ENCODE measurements at regions of chr7 and their contacts with region 1.

Region 1: DNA sequence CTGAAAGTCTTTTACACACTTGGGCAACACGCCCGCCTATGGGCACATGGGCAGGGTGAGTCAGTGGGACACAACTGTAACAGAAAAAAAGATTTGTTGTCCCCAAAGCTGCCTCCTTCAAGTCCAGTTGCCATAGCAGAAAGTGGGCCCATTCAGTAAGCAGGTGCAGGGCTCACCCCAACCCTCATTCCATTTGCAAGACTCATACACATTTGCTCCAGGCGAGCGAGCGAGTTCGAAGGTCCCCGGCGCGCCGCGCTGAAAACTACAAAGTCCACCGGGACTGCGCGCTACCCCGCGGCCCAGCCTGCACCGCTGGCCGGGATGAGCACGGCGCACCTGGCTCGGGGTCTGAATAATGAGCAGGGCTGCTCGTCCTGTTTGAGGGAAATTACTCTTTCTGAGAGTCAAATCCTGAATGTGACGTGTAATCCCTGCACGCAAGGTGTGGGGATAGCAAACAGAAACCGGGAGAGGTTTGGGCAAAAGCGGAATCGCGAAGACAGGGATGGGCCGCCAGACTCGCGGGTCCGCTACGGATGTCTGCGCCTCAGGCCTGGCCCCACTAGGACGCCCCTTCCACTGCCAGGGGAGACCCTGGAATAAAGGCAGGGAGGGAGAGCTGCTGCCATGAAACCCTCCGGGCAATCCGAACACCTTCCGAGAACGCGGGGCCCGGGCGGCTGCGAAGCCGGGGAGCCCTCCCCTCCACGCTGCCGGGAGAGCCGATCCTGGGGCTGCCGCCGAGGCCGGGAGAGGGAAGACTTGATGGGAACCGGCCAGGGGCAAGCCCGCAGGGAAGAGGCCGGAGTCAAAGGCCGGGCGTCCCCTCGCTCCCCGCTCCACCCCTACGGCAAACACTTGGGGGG is 982 bp downstream of the COBL start:
- DNase-seq: no peak
- ATAC-seq: peak; percentile 61

Region 2: DNA sequence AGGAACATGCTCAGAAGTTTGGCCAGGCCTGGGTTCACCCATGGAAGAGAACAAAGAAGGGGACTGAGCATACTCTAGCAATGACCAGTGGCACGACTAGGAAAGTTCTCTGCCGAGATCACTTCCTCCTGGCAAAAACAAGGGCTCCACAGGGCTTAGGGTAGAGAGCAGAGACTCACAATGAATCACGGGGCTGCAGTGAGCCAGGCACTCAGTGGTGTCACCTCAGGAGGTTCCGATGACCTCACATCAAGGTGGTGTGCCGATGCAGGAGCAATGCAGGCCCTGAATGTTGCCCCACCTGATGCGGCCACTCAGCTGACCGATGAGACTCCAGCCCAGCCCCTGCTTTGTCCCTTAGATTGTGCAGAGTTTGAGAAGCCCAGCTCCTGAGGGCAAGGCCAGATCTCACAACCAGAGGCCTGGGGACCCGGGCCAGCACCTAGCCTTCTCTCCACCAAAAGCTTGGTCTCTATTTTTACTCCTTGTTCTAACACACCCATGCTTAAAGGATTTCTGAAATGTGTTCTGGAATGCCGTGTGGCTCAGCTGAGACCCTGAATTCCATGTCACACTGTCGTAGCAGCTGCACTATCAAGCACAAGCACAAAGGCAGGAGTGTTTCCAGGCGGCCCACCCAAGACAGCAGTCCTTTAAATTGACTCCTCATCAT is 60.0 kb before region 1 on chr7:
- intact Hi-C with region 1: loop called (anchors 5 kb)
- DNase-seq: no peak
- ATAC-seq: peak; percentile 69

Region 3: DNA sequence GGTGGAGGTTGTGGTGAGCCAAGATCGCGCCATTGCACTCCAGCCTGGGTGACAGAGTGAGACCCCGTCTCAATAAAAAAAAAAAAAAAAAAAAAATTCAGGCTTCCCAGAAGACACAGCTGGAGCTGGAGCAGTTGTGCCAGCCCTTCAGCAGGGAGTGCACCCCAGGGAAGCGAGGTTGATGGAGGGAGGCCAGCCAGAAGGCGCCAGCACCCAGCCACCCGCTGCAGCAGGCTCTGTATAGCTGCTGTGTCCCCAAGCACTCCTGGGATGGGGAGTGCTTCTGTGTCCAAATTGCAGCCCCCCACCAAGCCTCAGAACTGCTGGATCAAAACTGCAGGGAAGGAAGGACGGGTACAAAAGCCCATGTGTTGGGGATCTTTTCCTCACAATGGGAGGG is 46.8 kb before region 1 on chr7:
- intact Hi-C with region 1: no loop called
- DNase-seq: no peak
- ATAC-seq: no peak

Region 4: DNA sequence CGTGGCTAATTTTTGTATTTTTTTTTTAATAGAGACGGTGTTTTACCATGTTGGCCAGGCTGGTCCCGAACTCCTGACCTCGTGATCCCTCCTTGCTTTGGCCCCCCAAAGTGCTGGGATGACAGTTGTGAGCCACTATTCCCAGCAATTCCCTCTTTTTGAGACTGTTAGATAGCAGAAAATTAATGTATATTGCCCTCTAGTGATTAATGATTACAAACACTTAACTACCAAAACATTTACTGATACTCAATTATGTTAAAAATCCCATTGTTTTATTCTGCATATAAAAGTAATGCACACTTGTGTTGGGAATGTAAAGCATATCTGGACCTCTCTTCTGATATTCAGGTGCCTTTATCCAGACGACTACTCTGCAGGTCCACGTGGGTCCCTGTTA is 42.2 kb after region 1 on chr7:
- intact Hi-C with region 1: loop called (anchors 5 kb)
- DNase-seq: no peak
- ATAC-seq: no peak

Measured in Right ventricle myocardium inferior (tissue), 1 donor.